ENCODE measurements at regions of chr17 and their contacts with region 1.

Region 1: DNA sequence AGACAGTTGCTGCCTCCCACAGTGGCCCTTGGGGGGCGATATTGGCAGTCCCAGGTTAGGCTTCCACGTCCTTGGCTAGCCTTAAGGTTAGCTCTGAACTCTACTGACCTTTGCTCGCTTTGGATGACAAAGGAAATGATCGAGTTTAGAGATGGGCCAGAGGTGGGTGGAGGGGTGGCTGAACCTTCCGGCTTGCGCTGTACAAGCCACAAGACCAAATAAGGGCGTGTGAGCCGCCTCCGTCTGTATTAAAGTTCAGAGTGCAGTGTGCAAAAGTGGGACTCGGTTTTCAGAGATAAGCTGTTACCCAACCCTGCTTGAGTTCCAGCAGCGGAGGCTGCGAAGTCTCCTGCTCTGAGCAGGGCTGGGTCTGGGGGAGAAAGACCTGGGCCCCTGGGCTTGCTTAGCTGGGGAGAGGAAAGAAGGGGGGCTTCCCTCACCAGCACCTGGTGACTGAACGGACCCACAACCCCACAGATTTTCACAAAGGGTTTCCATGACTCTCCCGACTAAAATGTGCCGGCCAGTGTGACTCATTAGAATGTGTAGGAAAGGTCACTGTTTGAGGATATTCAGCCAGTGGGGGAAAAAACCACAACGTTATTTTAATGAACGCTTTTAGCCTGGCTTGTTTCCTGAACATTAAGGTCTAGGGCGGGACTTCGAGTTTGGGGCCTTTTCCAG is 67.2 kb downstream of the CENPV start:
- DNase-seq: peak; percentile 69 to 82
- ATAC-seq: peak; percentile 93 to 96 (median 95)
- H3K4me3 ChIP-seq: peak overlapping the region in 7 of 10 donors; percentile 0 to 36 (median 27)
- H3K27ac ChIP-seq: peak overlapping the region; percentile 74 to 95 (median 86)
- H3K4me1 ChIP-seq: peaks cover 10 to 42% (median 27%) of the 10 kb centered on the region in 9 donors
- H3K27me3 ChIP-seq: no peaks in the 10 kb centered on the region
- CTCF ChIP-seq: peak in 6 of 9 donors; percentile 30 to 56 (median 48)

Region 2: GRCh38 chr17:16215273-16215964 is 70.7 kb before region 1 on chr17 and contains the start of gene NCOR1:
- intact Hi-C with region 1: loop called in 3 of 10 experiments (anchors 5 kb)
- DNase-seq: peak; percentile 94
- ATAC-seq: peak; percentile 95 to 98 (median 97)
- H3K4me3 ChIP-seq: peak within 1 kb of the TSS; percentile 63 to 100 (median 92)
- H3K27ac ChIP-seq: peak within 1 kb of the TSS; percentile 85 to 100 (median 98)
- H3K4me1 ChIP-seq: peaks cover 3 to 65% (median 50%) of the 10 kb centered on the region in 9 donors
- H3K27me3 ChIP-seq: no peaks in the 10 kb centered on the region
- CTCF ChIP-seq: peak in 7 of 9 donors; percentile 19 to 66 (median 43)
- total RNA-seq, gene NCOR1: 61.4 to 81.6 (median 74.8) TPM

Region 3: GRCh38 chr17:16353317-16354174 is 67.4 kb after region 1 on chr17 and contains the start of gene CENPV:
- intact Hi-C with region 1: loop called in 1 of 10 experiments (anchors 2 kb)
- DNase-seq: peak in 1 of 2 donors; percentile 34
- ATAC-seq: peak; percentile 38 to 87 (median 60)
- H3K4me3 ChIP-seq: peak within 1 kb of the TSS; percentile 32 to 73 (median 66)
- H3K27ac ChIP-seq: peak within 1 kb of the TSS in 2 of 10 donors; percentile 14 to 26
- H3K4me1 ChIP-seq: peaks cover 0 to 18% (median 12%) of the 10 kb centered on the region in 9 donors
- H3K27me3 ChIP-seq: peaks cover 0 to 16% (median 10%) of the 10 kb centered on the region in 7 donors
- CTCF ChIP-seq: peak in 3 of 9 donors; percentile 14 to 37 (median 31)
- total RNA-seq, gene CENPV: 6.4 to 20.5 (median 11.9) TPM

Region 4: DNA sequence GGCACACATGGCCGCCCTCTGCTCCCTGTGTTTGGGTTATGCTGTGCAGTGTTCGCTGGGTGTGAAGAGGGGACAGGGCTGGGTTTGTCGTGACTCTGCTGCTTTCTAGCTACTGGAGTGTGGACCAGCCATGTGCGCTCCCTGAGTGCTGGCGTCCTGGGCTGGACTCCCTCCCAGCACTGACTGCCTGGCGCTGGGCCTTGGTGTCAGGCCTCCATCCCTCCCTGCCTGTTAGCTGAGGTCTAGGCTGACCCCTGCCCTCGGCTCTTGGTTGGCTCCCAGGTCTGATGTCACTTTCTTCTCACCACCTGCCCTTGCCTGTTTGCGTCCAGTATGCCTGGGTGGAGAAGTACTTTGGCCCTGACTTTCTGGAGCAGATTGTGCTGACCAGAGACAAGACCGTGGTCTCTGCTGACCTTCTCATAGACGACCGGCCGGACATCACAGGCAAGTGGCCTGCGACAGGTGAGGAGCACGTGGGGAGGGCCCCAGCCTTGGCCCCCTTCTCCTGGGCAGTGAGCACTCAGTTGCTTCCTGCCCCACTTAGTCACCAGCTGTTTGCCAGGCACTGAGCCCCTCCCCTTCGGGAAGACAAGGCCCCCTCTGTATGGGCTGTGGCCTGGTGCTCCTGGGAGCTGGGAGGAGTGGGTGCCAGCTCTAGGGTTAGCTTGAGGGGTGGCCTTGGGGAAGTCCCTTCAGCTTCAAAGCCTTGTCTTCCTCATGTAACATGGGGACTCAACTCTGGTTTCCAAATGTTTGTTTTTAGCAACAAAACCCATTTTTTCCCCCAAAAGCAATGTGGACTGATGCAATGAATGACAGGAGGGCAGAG is 1058.6 kb after region 1 on chr17:
- intact Hi-C with region 1: loop called in 1 of 10 experiments (anchors 5 kb)
- DNase-seq: no peak
- ATAC-seq: peak in 4 of 8 donors; percentile 14 to 48 (median 18)
- H3K4me3 ChIP-seq: no peak overlapping the region
- H3K27ac ChIP-seq: no peak overlapping the region
- H3K4me1 ChIP-seq: no peaks in the 10 kb centered on the region
- H3K27me3 ChIP-seq: no peaks in the 10 kb centered on the region
- CTCF ChIP-seq: no peak